ENCODE measurements at regions of chr6 and their contacts with region 1.

Region 1: DNA sequence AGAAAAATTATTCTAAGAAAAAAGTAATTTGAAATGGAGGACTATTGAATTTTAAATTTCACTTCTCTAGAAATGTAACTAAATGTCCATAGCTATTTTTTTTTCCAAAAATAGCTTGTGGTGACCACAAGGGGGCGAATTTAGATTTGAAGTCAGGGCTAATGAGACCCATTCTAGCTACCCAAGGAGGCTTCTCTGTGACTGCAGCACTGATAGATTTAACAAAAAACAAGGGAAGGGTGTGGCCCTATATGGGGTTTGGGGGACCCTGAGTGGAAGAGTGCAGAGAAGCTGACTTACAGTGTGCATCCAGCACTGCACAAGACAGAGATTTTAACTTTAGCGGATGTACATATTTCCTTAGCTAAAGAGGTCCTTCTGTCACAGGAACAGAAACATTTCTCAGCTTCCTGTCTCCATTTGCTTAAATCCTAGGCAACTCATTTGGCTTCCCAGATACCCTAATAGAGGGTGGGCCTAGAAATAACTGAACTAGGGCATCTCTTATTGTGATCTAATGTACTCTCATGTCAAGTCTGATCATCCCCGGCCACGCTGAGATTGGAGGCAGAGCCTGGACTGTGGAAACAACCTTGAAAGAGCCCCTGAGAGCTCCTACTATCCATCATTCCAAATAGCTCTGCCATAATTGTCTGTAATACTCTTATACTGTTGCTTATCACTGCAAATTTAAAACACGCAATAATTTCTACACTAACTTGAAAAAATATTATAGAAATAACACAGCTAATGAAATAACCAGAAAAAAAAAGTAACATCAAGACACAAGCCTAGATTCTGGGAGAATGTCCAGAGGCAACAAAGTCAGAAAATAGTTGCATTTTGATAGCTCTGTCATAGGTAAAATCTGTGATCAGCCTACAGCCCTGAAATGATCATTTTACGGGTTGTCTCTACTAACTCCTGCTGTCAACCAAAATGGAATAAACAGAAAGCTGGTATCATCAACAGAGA is 93.6 kb downstream of the SNAP91 start:
- DNase-seq: no peak
- H3K4me3 ChIP-seq: no peak overlapping the region
- H3K27ac ChIP-seq: no peak overlapping the region
- H3K4me1 ChIP-seq: no peaks in the 10 kb centered on the region
- H3K27me3 ChIP-seq: no peaks in the 10 kb centered on the region
- CTCF ChIP-seq: peak in 2 of 3 experiments; percentile 42 to 44; a peak in 3 of 4 replicates
- EP300 ChIP-seq: no peak
- POLR2A ChIP-seq: no peak
- RAD21 ChIP-seq: peak; percentile 67 to 70

Region 2: DNA sequence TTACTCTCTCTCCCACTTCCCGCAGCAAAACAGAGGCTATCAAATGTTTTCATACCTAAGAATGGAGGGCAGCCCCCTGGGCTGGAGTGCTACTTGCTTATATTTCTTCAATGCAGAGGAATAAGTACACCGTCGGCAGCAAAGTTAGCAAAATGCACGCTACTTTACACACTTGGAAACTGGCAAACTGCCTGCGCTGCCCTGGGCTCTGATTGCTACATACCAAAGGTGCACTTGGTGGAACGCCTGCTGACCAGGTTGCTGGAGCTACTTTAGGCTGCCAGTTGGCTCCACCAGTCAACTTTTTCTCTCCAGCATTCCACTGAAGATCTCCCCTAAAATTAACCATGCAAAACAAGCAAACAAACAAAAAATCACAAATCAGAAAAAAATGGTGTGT is 40.5 kb before region 1 on chr6:
- CTCF ChIA-PET with region 1: no interaction called
- POLR2A ChIA-PET with region 1: no interaction called
- DNase-seq: no peak
- H3K4me3 ChIP-seq: no peak overlapping the region
- H3K27ac ChIP-seq: no peak overlapping the region
- H3K4me1 ChIP-seq: no peaks in the 10 kb centered on the region
- H3K27me3 ChIP-seq: no peaks in the 10 kb centered on the region
- CTCF ChIP-seq: no peak
- EP300 ChIP-seq: no peak
- POLR2A ChIP-seq: no peak
- RAD21 ChIP-seq: no peak

Region 3: DNA sequence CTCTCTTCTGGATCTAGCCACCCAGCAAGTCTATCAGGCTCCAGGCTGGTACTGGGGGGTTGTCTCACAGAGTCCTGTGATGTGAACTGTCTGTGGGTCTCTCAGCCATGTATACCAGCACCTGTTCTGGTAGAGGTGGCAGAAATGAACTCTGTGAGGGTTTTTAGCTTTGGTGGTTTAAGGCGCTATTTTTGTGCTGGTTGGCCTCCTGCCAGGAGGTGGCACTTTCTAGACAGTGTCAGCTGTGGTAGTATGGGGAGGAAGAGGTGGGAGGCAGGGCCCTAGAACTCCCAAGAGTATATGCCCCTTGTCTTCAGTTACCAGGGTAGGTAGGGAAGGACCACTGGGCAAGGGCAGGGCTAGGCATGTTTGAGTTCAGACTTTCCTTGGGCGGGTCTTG is 17.8 kb after region 1 on chr6:
- CTCF ChIA-PET with region 1: interaction called, 15 read pairs
- POLR2A ChIA-PET with region 1: no interaction called
- DNase-seq: peak in 1 of 2 experiments; percentile 48
- H3K4me3 ChIP-seq: no peak overlapping the region
- H3K27ac ChIP-seq: no peak overlapping the region
- H3K4me1 ChIP-seq: no peaks in the 10 kb centered on the region
- H3K27me3 ChIP-seq: no peaks in the 10 kb centered on the region
- CTCF ChIP-seq: peak in 1 of 3 experiments; percentile 15; a peak in 1 of 4 replicates
- EP300 ChIP-seq: no peak
- POLR2A ChIP-seq: no peak
- RAD21 ChIP-seq: peak in 1 of 2 experiments; percentile 24; a peak in 1 of 4 replicates

Region 4: GRCh38 chr6:83708970-83709747 is 93.8 kb after region 1 on chr6 and contains the start of gene SNAP91:
- CTCF ChIA-PET with region 1: interaction called, 10 read pairs
- POLR2A ChIA-PET with region 1: no interaction called
- DNase-seq: peak; percentile 15 to 85
- H3K4me3 ChIP-seq: peak within 1 kb of the TSS; percentile 47 to 84 (median 78)
- H3K27ac ChIP-seq: no peak within 1 kb of the TSS
- H3K4me1 ChIP-seq: peaks cover 0 to 2% (median under 1%) of the 10 kb centered on the region in 4 experiments; a peak in 1 of 7 replicates
- H3K27me3 ChIP-seq: peaks cover 7 to 34% (median 25%) of the 10 kb centered on the region in 4 experiments
- CTCF ChIP-seq: no peak
- EP300 ChIP-seq: no peak
- POLR2A ChIP-seq: no peak
- RAD21 ChIP-seq: no peak
- total RNA-seq, gene SNAP91: 1.0 and 1.5 TPM in 2 replicates

Region 5: GRCh38 chr6:83804886-83805285 is 189.6 kb after region 1 on chr6:
- CTCF ChIA-PET with region 1: interaction called, 25 read pairs
- POLR2A ChIA-PET with region 1: no interaction called
- DNase-seq: no peak
- H3K4me3 ChIP-seq: no peak overlapping the region
- H3K27ac ChIP-seq: no peak overlapping the region
- H3K4me1 ChIP-seq: no peaks in the 10 kb centered on the region
- H3K27me3 ChIP-seq: no peaks in the 10 kb centered on the region
- CTCF ChIP-seq: peak in 1 of 3 experiments; percentile 6; a peak in 1 of 4 replicates
- EP300 ChIP-seq: no peak
- POLR2A ChIP-seq: no peak
- RAD21 ChIP-seq: peak; percentile 47 to 49

Region 6: DNA sequence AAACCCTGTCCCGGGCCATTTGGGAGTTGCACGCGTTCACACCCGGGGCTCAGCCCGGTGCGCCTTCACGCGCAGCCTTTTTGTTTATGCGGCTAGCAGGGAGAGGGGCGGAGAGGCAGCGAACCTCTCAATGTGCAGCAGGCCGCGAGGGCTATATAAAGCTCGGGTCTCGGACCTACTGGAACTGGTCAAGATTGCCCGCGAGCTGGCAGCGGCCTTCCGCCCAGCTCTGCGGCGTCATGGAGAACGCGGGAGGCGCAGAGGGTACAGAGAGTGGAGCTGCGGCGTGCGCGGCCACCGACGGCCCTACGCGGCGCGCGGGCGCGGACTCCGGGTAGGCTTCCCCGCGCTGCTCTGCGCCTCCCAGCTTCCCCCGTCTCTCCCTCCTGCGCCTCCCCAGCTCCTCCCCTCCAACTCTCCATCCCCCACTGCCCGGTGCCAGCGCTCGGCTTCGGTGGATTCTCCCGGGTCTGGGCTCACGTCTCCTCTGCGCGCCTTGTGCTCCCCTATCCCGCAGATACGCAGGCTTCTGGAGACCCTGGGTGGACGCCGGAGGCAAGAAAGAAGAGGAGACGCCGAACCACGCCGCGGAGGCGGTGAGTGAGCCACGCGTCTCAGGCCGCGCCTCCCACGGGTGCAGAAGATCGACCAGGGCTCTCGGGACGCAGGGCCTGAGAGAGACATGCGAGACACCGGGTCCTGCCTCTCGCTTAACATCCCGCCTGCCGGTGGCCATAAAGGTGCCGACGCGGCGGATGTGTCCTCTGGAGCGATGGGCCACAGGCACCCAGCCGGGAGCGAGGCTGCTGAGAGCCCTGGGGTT is 238.1 kb after region 1 on chr6 and contains the start of gene RIPPLY2:
- CTCF ChIA-PET with region 1: interaction called, 10 read pairs
- POLR2A ChIA-PET with region 1: no interaction called
- DNase-seq: peak; percentile 15 to 79
- H3K4me3 ChIP-seq: peak within 1 kb of the TSS; percentile 39 to 73 (median 68)
- H3K27ac ChIP-seq: no peak within 1 kb of the TSS
- H3K4me1 ChIP-seq: peaks cover 0 to 4% (median 0%) of the 10 kb centered on the region in 4 experiments; a peak in 3 of 7 replicates
- H3K27me3 ChIP-seq: peaks cover 1 to 32% (median 21%) of the 10 kb centered on the region in 4 experiments
- CTCF ChIP-seq: no peak
- EP300 ChIP-seq: no peak
- POLR2A ChIP-seq: peak in 1 of 2 experiments; percentile 65; a peak in 2 of 3 replicates
- RAD21 ChIP-seq: no peak
- total RNA-seq, gene RIPPLY2: 0.74 and 1.9 TPM in 2 replicates

Region 7: GRCh38 chr6:84220809-84221409 is 605.6 kb after region 1 on chr6:
- CTCF ChIA-PET with region 1: interaction called, 22 read pairs
- POLR2A ChIA-PET with region 1: no interaction called
- DNase-seq: no peak
- H3K4me3 ChIP-seq: no peak overlapping the region
- H3K27ac ChIP-seq: no peak overlapping the region
- H3K4me1 ChIP-seq: peaks cover 0 to 4% (median 0%) of the 10 kb centered on the region in 4 experiments; a peak in 1 of 7 replicates
- H3K27me3 ChIP-seq: no peaks in the 10 kb centered on the region
- CTCF ChIP-seq: peak in 2 of 3 experiments; percentile 10 to 20; a peak in 2 of 4 replicates
- EP300 ChIP-seq: no peak
- POLR2A ChIP-seq: no peak
- RAD21 ChIP-seq: peak; percentile 54 to 55

Measured in H1 (cell line).